ENCODE measurements at regions of chr5 and their contacts with region 1.

Region 1: DNA sequence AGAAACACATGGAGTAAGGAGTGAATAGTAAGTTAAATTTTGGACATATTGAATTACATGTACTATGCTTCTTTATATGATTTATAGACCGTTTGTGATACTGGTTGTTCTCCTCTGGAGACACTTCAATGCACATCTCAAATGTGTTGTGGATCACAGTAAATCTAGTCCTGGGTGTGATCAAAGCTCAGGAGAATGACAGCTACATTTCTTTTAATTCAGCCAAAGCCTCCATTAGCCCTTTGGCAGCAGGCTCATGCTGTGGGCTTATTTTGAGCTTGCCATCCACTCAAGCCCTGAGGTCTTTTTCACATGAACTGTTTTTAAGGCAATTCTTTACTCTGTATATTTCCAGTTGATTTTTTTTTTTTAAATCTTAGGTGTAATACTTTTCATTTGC is 34.6 kb upstream of the ACTBL2 start:
- DNase-seq: no peak
- ATAC-seq: no peak
- H3K4me3 ChIP-seq: no peak overlapping the region
- H3K27ac ChIP-seq: no peak overlapping the region
- H3K4me1 ChIP-seq: no peaks in the 10 kb centered on the region
- H3K27me3 ChIP-seq: no peaks in the 10 kb centered on the region
- CTCF ChIP-seq: no peak

Region 2: DNA sequence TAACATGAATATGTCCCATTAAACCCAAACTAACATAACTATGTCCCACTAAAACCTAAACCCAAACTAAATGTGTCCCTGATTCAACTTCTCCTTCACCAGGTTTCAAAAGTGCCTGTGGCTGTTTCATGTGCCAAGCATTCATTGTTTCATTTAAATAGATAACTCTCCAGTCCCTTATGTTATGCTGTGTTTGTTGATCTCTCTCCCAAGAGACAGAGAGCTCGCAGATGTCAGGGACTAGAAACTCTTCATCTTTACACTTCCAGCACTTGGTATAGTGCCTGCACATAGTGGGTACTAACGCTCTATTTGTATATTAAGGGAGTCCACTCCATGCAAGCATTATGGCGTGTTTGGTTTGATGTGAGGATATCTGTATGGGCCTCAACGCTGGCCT is 225.4 kb before region 1 on chr5:
- CTCF ChIA-PET with region 1: no interaction called
- POLR2A ChIA-PET with region 1: interaction called, 14 read pairs
- in situ Hi-C with region 1: no loop called
- intact Hi-C with region 1: no loop called
- DNase-seq: no peak
- ATAC-seq: no peak
- H3K4me3 ChIP-seq: no peak overlapping the region
- H3K27ac ChIP-seq: no peak overlapping the region
- H3K4me1 ChIP-seq: no peaks in the 10 kb centered on the region
- H3K27me3 ChIP-seq: no peaks in the 10 kb centered on the region
- CTCF ChIP-seq: no peak

Measured in Panc1 (cell line).